CD8-positive, alpha-beta memory T cell (primary cell): ENCODE measurements at regions of chr7 and their contacts with region 1.

Region 1: DNA sequence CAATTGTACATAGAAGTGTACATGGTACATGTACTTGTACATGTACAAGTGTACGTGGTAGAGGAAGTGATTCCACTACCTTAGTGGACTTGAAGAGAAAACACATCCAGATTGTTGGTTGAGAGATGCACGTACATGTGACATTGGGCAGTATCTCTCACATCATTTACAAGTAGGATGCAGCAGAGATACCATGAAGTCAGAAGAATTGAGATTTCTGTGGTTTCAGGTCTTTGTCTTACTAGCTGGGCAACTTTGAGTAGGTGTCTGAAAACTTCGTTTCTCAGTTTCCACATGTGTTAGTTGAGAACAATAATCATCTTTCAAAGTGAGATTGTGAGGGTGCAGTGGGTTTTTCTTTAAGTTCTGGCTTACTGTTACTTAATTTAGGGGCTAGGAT is 21.5 kb downstream of the CLDN12 start:
- DNase-seq: no peak
- H3K4me3 ChIP-seq: no peak overlapping the region
- H3K4me3 Mint-ChIP-seq: no peak overlapping the region
- H3K27ac ChIP-seq: no peak overlapping the region
- H3K27ac Mint-ChIP-seq: peak overlapping the region in 2 of 8 donors; percentile 2
- H3K4me1 ChIP-seq: no peaks in the 10 kb centered on the region
- H3K4me1 Mint-ChIP-seq: peaks cover 0 to 2% (median 0%) of the 10 kb centered on the region in 3 donors
- H3K27me3 ChIP-seq: no peaks in the 10 kb centered on the region
- H3K27me3 Mint-ChIP-seq: no peaks in the 10 kb centered on the region

Region 2: DNA sequence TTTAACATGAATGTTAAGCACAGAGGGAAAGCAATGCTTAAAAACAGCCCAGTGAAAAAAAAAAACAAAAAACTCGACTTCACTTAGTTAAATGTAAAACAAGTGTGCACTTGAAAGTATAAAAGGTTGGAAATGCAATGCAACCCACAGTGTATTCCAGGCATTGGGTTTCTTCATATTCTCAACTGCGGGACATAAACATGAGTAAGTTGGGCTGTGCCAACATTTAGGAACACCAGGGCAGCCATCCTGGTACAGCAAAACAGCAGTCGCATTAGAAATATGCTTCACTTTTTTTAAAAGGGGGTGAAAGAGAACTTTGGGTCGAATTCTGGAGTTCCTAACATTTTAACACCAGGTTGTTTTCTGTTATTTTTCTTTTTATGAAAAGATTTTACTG is 269.5 kb before region 1 on chr7:
- CTCF ChIA-PET with region 1: interaction called, 45 read pairs
- POLR2A ChIA-PET with region 1: no interaction called
- DNase-seq: no peak
- H3K4me3 ChIP-seq: no peak overlapping the region
- H3K4me3 Mint-ChIP-seq: no peak overlapping the region
- H3K27ac ChIP-seq: no peak overlapping the region
- H3K27ac Mint-ChIP-seq: no peak overlapping the region
- H3K4me1 ChIP-seq: no peaks in the 10 kb centered on the region
- H3K4me1 Mint-ChIP-seq: peaks cover 4 to 9% (median 4%) of the 10 kb centered on the region in 3 donors
- H3K27me3 ChIP-seq: no peaks in the 10 kb centered on the region
- H3K27me3 Mint-ChIP-seq: peaks cover 7 to 40% of the 10 kb centered on the region in 2 donors

Region 3: GRCh38 chr7:90312745-90313144 is 112.0 kb before region 1 on chr7:
- CTCF ChIA-PET with region 1: interaction called, 10 read pairs
- POLR2A ChIA-PET with region 1: no interaction called
- DNase-seq: no peak
- H3K4me3 ChIP-seq: no peak overlapping the region
- H3K4me3 Mint-ChIP-seq: no peak overlapping the region
- H3K27ac ChIP-seq: no peak overlapping the region
- H3K27ac Mint-ChIP-seq: no peak overlapping the region
- H3K4me1 ChIP-seq: no peaks in the 10 kb centered on the region
- H3K4me1 Mint-ChIP-seq: no peaks in the 10 kb centered on the region
- H3K27me3 ChIP-seq: no peaks in the 10 kb centered on the region
- H3K27me3 Mint-ChIP-seq: peaks cover 9 to 31% of the 10 kb centered on the region in 2 donors

Region 4: DNA sequence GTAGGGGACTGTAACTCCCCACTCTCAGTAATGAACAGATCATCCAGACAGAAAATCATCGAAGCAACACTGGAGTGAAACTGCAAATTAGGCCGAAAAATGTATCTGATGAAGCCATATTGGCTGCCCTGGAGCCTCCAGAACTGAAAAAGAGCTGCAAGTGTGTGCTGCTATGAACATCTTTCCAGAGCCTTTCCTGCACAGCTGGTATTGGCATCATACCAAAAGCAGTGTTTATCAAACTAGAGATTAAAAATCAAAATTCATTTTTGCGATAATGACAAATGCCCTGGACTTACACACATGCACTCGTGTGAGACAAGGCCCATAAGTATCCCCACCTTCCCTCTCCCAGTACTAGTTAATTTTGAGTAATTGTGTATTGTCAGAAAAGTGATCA is 28.3 kb before region 1 on chr7:
- CTCF ChIA-PET with region 1: no interaction called
- POLR2A ChIA-PET with region 1: no interaction called
- DNase-seq: no peak
- H3K4me3 ChIP-seq: no peak overlapping the region
- H3K4me3 Mint-ChIP-seq: no peak overlapping the region
- H3K27ac ChIP-seq: no peak overlapping the region
- H3K27ac Mint-ChIP-seq: no peak overlapping the region
- H3K4me1 ChIP-seq: no peaks in the 10 kb centered on the region
- H3K4me1 Mint-ChIP-seq: no peaks in the 10 kb centered on the region
- H3K27me3 ChIP-seq: no peaks in the 10 kb centered on the region
- H3K27me3 Mint-ChIP-seq: no peaks in the 10 kb centered on the region